ENCODE measurements at regions of chr7 and their contacts with region 1.

Region 1: DNA sequence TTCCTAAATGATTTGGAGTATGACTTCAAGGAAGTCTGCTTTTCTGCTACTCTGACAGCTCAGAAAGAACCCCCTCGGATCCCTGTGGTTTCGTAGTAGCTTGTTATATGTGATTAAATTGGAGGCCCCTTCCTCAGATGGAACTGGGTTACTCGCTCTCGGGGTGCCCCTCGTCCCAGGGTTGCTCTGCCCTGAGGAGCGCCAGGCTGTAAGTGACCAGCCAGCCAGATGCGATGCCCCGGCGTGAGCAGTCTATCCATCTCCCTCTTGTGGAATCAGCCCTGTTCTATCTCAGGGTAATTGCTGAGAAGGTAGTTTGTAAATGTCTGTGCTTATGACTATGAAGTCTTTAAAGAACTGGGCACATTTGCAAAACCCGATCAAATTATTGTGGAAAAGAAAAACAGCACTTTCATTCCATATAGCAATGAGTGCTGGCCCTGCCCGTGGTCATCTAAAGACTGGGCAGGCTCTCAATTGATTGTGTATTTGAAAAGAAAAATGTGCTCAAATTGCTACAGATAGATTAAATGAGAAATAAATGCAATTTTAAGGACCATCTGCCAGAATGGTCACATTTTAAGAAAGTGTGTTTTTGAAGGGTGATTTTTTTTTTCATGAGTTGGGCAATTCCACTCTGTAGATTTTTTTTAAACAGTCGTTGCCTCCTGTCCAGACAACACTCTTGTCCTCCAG is 672.1 kb downstream of the SDK1 start:
- DNase-seq: no peak

Region 2: GRCh38 chr7:2870471-2870931 is 1102.6 kb before region 1 on chr7:
- intact Hi-C with region 1: loop called in 1 of 2 experiments (anchors 2 kb)
- DNase-seq: peak; percentile 93

Region 3: DNA sequence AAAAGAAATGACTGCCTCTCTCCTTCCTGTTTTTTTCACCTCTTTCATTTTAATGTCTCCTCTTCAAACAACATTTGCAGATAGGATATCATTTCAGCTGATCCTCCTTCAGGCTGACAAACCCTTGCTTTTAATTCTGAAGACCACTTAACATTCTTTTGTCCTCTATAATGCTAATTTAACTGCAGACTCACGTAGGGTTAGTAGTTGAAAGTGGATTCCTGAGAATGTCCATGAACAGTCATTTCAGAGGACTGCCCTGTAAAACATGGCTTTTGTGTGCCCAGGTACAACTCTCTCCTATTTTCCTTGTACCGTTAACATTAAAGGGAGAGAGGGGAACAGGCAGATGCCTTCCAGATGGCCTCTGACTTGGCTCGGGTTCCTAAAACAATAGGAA is 147.6 kb before region 1 on chr7:
- intact Hi-C with region 1: no loop called
- DNase-seq: no peak

Region 4: GRCh38 chr7:4042402-4043045 is 69.4 kb after region 1 on chr7:
- intact Hi-C with region 1: no loop called
- DNase-seq: no peak

Measured in posterior vena cava (tissue), 2 donors.